ENCODE measurements at regions of chr12 and their contacts with region 1.

Region 1: GRCh38 chr12:96578526-96579125 is 89.2 kb downstream of the CFAP54 start:
- DNase-seq: no peak
- H3K4me3 ChIP-seq: no peak overlapping the region
- H3K27ac ChIP-seq: no peak overlapping the region
- H3K4me1 ChIP-seq: no peaks in the 10 kb centered on the region
- H3K27me3 ChIP-seq: no peaks in the 10 kb centered on the region
- CTCF ChIP-seq: peak; percentile 49 to 64 (median 61)
- EP300 ChIP-seq: no peak
- POLR2A ChIP-seq: no peak

Region 2: GRCh38 chr12:96534339-96534738 is 44.3 kb before region 1 on chr12:
- intact Hi-C with region 1: no loop called
- DNase-seq: no peak
- H3K4me3 ChIP-seq: no peak overlapping the region
- H3K27ac ChIP-seq: no peak overlapping the region
- H3K4me1 ChIP-seq: no peaks in the 10 kb centered on the region
- H3K27me3 ChIP-seq: no peaks in the 10 kb centered on the region
- CTCF ChIP-seq: no peak
- EP300 ChIP-seq: no peak
- POLR2A ChIP-seq: no peak

Region 3: DNA sequence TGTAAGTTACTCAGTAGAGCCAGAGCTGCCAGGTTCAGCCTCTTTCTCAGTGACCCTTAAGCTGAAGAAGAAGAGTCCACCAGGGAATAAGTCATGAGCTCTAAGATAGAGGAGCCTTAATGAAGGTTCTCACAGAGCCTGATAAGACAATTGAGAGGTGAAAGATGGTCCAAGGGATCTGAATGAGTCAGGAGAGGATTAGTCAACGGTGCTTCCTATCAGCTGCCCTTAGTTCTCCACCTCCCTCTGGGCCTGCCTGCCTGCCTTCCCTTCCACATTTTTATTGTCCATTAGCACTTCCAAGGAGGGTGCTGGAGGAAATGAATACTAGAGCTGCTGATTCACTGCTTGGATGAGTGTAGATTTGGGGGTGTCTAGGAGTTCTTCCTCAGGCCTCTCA is 722.3 kb after region 1 on chr12:
- intact Hi-C with region 1: loop called (anchors 5 kb)
- DNase-seq: no peak
- H3K4me3 ChIP-seq: no peak overlapping the region
- H3K27ac ChIP-seq: no peak overlapping the region
- H3K4me1 ChIP-seq: no peaks in the 10 kb centered on the region
- H3K27me3 ChIP-seq: no peaks in the 10 kb centered on the region
- CTCF ChIP-seq: no peak
- EP300 ChIP-seq: no peak
- POLR2A ChIP-seq: no peak

Region 4: DNA sequence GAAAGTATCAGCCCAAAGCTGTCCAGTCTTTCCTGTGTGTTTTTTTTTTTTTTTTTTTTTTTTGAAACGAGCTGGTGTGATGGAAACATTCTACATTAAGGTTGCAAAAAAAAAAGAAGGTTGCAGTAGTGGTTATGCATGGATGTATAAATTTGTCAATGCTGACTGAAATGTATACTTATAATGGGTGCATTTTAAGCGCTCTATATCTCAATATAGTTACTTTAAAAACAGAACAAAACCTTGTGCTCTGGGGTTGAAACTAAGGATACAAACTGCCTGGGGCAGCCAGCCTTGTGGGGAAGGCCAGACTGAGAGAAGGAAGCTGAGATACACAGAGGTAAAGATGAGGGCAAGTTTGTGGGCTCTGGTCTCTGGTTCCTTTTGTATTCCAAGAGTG is 796.7 kb after region 1 on chr12:
- intact Hi-C with region 1: no loop called
- DNase-seq: no peak
- H3K4me3 ChIP-seq: no peak overlapping the region
- H3K27ac ChIP-seq: no peak overlapping the region
- H3K4me1 ChIP-seq: peaks cover 0 to 5% (median 0%) of the 10 kb centered on the region in 4 donors
- H3K27me3 ChIP-seq: no peaks in the 10 kb centered on the region
- CTCF ChIP-seq: no peak
- EP300 ChIP-seq: no peak
- POLR2A ChIP-seq: no peak

Region 5: GRCh38 chr12:98149270-98149669 is 1570.6 kb after region 1 on chr12:
- intact Hi-C with region 1: no loop called
- DNase-seq: peak; percentile 26
- H3K4me3 ChIP-seq: no peak overlapping the region
- H3K27ac ChIP-seq: no peak overlapping the region
- H3K4me1 ChIP-seq: peaks cover 0 to 4% (median 1%) of the 10 kb centered on the region in 4 donors
- H3K27me3 ChIP-seq: no peaks in the 10 kb centered on the region
- CTCF ChIP-seq: no peak
- EP300 ChIP-seq: no peak
- POLR2A ChIP-seq: no peak